CD4-positive, alpha-beta T cell (primary cell): ENCODE measurements at regions of chr1 and their contacts with region 1.

Region 1: DNA sequence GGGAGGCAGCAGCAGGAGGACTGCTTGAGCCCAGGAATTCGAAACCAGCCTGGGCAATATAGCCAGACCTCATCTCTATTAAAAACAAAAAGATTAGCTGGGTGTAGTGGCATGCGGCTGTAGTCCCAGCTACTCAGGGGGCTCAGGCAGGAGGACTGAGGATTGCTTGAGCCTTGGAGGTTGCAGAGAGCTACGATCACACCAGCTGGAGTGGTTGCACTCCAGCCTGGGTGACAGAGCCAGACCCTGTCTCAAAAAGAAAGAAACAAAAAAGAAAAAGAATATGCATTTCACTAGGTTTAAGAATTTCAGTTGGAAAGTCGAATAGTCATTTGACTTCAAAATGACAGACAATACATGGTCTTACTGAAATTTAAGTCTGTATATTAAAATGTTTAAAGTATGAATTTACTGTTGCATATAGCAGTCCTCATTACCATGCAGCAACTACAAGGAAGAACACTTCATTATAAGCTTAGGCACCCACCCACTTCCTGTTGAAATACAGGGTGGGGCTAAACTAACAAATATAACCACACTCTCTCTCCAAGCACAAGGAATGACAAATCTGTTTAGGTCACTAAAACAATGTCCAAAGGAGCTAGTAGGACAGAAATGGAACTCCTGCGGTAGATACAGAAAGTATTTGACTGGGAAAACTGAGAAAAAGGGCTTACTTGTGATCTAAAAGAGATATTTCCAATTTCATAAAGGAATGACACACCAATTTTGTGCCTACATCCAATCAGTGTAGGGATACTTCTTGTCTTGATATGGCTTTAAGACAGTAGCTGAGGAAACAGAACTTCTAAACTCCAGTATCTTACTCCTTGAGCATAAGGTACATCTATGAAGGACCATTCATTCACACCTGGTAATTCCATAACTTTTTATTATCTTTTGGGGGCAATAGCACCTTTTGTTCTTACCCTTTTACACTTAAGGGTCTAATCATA is 44.1 kb downstream of the GPR3 start:
- DNase-seq: peak in 4 of 14 experiments; percentile 34 to 78 (median 64)
- ATAC-seq: peak; percentile 96
- H3K4me3 ChIP-seq: peak overlapping the region; percentile 21
- H3K4me3 Mint-ChIP-seq: peak overlapping the region; percentile 73
- H3K27ac ChIP-seq: peak overlapping the region; percentile 54 to 65
- H3K27ac Mint-ChIP-seq: peak overlapping the region; percentile 80
- H3K4me1 ChIP-seq: peaks cover 69% of the 10 kb centered on the region
- H3K4me1 Mint-ChIP-seq: peaks cover 75% of the 10 kb centered on the region
- H3K27me3 ChIP-seq: no peaks in the 10 kb centered on the region
- H3K27me3 Mint-ChIP-seq: no peaks in the 10 kb centered on the region
- CTCF ChIP-seq: no peak

Region 2: GRCh38 chr1:27473755-27474154 is 37.3 kb after region 1 on chr1:
- CTCF ChIA-PET with region 1: interaction called, 3 read pairs
- POLR2A ChIA-PET with region 1: no interaction called
- intact Hi-C with region 1: loop called (anchors 5 kb)
- DNase-seq: peak in 2 of 14 experiments; percentile 3 to 18
- ATAC-seq: peak; percentile 32
- H3K4me3 ChIP-seq: no peak overlapping the region
- H3K4me3 Mint-ChIP-seq: peak overlapping the region; percentile 16
- H3K27ac ChIP-seq: no peak overlapping the region
- H3K27ac Mint-ChIP-seq: peak overlapping the region; percentile 57
- H3K4me1 ChIP-seq: peaks cover 59% of the 10 kb centered on the region
- H3K4me1 Mint-ChIP-seq: peaks cover 73% of the 10 kb centered on the region
- H3K27me3 ChIP-seq: no peaks in the 10 kb centered on the region
- H3K27me3 Mint-ChIP-seq: no peaks in the 10 kb centered on the region
- CTCF ChIP-seq: no peak